PC-3 (cell line): ENCODE measurements at regions of chr12 and their contacts with region 1.

Region 1: GRCh38 chr12:22046090-22046967 is at the start of gene CMAS:
- DNase-seq: peak; percentile 61
- ATAC-seq: peak; percentile 71
- H3K4me3 ChIP-seq: peak within 1 kb of the TSS; percentile 94
- H3K27ac ChIP-seq: peak within 1 kb of the TSS; percentile 61
- H3K4me1 ChIP-seq: peaks cover 24% of the 10 kb centered on the region
- H3K27me3 ChIP-seq: no peaks in the 10 kb centered on the region
- CTCF ChIP-seq: no peak
- total RNA-seq, gene CMAS: 25.0 and 47.6 TPM in 2 replicates

Region 2: DNA sequence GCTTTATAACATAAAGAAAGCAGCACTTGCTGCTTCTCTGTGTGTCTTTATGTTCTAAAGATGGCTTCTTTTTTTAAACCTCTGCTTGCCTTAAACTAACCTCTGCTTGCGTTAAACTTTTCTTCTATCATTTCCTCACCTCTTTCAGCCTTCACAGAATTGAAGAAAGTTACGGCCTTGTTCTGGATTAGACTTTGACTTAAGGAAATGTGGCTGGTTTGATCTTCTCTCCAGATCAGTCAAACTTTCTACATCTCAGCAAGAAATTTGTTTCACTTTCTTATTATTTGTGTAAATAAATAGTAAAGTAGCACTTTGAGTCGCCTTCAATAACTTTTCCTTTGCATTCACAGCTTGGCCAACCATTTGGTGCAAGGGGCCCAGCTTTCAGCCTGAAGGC is 63.8 kb after region 1 on chr12:
- CTCF ChIA-PET with region 1: no interaction called
- POLR2A ChIA-PET with region 1: no interaction called
- intact Hi-C with region 1: no loop called
- DNase-seq: no peak
- ATAC-seq: no peak
- H3K4me3 ChIP-seq: no peak overlapping the region
- H3K27ac ChIP-seq: no peak overlapping the region
- H3K4me1 ChIP-seq: no peaks in the 10 kb centered on the region
- H3K27me3 ChIP-seq: no peaks in the 10 kb centered on the region
- CTCF ChIP-seq: no peak

Region 3: DNA sequence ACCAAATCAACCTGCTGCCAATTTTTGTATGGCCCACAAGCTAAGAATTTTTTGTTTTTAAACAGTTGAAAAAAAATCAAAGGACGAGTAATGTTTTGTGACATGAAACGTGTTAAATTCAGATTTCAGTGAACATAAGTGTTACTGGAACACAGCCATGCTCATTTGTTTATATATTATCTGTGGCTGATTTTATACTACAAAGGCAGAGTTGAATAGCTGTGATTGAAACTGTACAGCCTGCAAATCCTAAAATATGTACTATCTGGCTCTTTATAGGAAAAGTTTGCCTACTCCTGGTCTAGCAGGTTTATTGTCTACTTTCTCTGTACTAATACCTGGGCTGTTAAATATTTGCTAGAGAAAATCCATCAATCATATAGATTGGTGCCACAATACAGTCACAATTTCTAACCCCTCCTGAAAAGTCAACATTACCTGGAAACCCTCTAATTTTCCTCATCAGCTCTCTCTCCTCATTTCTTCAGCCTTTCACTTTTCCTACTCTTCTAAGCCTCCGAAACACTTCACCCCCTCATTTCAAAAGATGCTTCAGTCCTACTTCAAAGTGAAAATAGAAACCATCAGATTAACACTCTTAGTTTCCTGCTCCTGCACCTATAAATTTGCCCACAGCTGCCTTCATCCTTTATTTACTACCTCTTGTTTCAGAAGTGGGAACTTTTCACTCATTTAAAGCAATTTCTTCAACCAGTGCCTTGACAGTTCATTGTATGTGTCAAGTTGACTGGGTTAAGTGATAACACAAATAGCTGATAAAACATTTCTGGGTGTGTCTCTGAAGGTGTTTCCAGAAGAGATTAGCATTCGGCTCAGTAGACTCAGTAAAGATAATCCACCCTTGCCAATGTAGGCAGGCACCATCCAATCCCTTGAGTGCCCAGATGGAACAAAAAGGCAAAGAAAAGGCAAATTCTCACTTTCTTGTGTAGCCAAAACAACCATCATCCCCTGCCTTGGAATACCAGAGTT is 516.0 kb after region 1 on chr12:
- CTCF ChIA-PET with region 1: no interaction called
- POLR2A ChIA-PET with region 1: interaction called, 13 read pairs
- intact Hi-C with region 1: no loop called
- DNase-seq: no peak
- ATAC-seq: no peak
- H3K4me3 ChIP-seq: no peak overlapping the region
- H3K27ac ChIP-seq: no peak overlapping the region
- H3K4me1 ChIP-seq: no peaks in the 10 kb centered on the region
- H3K27me3 ChIP-seq: no peaks in the 10 kb centered on the region
- CTCF ChIP-seq: no peak